Right lobe of liver (tissue), 6 donors: ENCODE measurements at regions of chr2 and their contacts with region 1.

Region 1: GRCh38 chr2:221573430-221574230 is 1.5 kb upstream of the EPHA4 start:
- DNase-seq: peak; percentile 86 to 87 (median 86)
- ATAC-seq: peak; percentile 80 to 86 (median 84)
- H3K4me3 ChIP-seq: peak overlapping the region; percentile 49 to 65 (median 61)
- H3K27ac ChIP-seq: peak overlapping the region in 2 of 3 donors; percentile 3 to 42
- H3K4me1 ChIP-seq: peaks cover 0 to 20% (median 2%) of the 10 kb centered on the region in 4 donors
- H3K27me3 ChIP-seq: peaks cover 3 to 20% of the 10 kb centered on the region in 2 donors
- CTCF ChIP-seq: peak; percentile 92 to 97 (median 96)
- POLR2A ChIP-seq: no peak

Region 2: GRCh38 chr2:220687231-220687843 is 886.3 kb before region 1 on chr2:
- intact Hi-C with region 1: loop called (anchors 10 kb)
- DNase-seq: peak; percentile 58 to 66 (median 61)
- ATAC-seq: peak; percentile 96 to 99 (median 98)
- H3K4me3 ChIP-seq: no peak overlapping the region
- H3K27ac ChIP-seq: no peak overlapping the region
- H3K4me1 ChIP-seq: no peaks in the 10 kb centered on the region
- H3K27me3 ChIP-seq: no peaks in the 10 kb centered on the region
- CTCF ChIP-seq: peak; percentile 71 to 86 (median 80)
- POLR2A ChIP-seq: no peak

Region 3: GRCh38 chr2:221731443-221732145 is 158.0 kb after region 1 on chr2:
- intact Hi-C with region 1: no loop called
- DNase-seq: no peak
- ATAC-seq: peak in 3 of 4 donors; percentile 36 to 85 (median 81)
- H3K4me3 ChIP-seq: no peak overlapping the region
- H3K27ac ChIP-seq: no peak overlapping the region
- H3K4me1 ChIP-seq: peaks cover 0 to 5% (median 0%) of the 10 kb centered on the region in 4 donors
- H3K27me3 ChIP-seq: no peaks in the 10 kb centered on the region
- CTCF ChIP-seq: no peak
- POLR2A ChIP-seq: no peak